ENCODE measurements at regions of chr19 and their contacts with region 1.

Region 1: DNA sequence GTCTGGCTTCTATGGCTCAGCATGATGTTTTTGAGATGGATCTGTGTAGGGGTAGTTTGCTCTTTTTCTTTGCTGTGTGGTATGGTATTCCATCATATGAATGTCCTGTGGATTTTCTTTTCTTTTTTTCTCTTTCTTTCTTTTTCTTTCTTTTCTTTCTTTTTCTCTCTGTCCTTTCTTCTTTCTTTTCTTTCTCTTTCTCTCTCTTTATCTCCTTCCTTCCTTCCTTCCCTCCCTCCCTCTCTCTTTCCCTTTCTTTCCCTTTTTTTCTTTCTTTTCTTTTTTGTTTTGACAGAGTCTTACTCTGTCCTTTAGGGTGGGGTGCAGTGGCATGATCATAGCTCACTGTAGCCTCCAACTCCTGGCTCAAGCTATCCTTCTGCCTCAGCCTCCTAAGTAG is 9.0 kb upstream of the HNRNPUL1 start:
- DNase-seq: no peak
- ATAC-seq: no peak
- H3K4me3 ChIP-seq: no peak overlapping the region
- H3K27ac ChIP-seq: no peak overlapping the region
- H3K4me1 ChIP-seq: no peaks in the 10 kb centered on the region
- H3K27me3 ChIP-seq: no peaks in the 10 kb centered on the region
- CTCF ChIP-seq: no peak
- POLR2A ChIP-seq: no peak

Region 2: GRCh38 chr19:41206926-41207750 is 48.0 kb before region 1 on chr19:
- intact Hi-C with region 1: loop called (anchors 5 kb)
- DNase-seq: peak in 3 of 4 donors; percentile 22 to 28 (median 25)
- ATAC-seq: no peak
- H3K4me3 ChIP-seq: no peak overlapping the region
- H3K27ac ChIP-seq: no peak overlapping the region
- H3K4me1 ChIP-seq: no peaks in the 10 kb centered on the region
- H3K27me3 ChIP-seq: no peaks in the 10 kb centered on the region
- CTCF ChIP-seq: no peak
- POLR2A ChIP-seq: no peak

Region 3: GRCh38 chr19:41296433-41296871 is 41.3 kb after region 1 on chr19:
- intact Hi-C with region 1: no loop called
- DNase-seq: no peak
- ATAC-seq: no peak
- H3K4me3 ChIP-seq: no peak overlapping the region
- H3K27ac ChIP-seq: peak overlapping the region in 3 of 4 donors; percentile 35 to 72 (median 59)
- H3K4me1 ChIP-seq: peaks cover 20% of the 10 kb centered on the region
- H3K27me3 ChIP-seq: no peaks in the 10 kb centered on the region
- CTCF ChIP-seq: no peak
- POLR2A ChIP-seq: no peak

Region 4: DNA sequence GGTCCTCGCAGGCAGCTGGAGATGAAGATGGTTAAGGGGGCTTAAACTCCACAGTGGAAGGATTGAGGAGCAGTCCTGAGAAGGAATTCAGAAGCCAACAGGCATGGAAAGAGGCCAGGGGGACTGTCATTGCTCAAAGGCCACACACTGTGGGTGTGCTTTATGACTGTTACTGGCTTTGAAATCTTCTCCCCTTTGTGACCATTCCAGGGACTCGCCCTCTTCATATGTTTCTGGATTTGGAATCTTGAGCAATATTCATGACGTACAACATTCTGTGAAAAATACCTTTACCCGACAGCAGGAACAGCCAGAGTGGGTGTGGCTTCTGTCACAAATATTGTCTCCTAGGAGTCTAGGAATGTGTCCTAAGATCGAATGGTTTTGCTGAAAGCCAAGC is 416.3 kb after region 1 on chr19:
- intact Hi-C with region 1: no loop called
- DNase-seq: no peak
- ATAC-seq: no peak
- H3K4me3 ChIP-seq: no peak overlapping the region
- H3K27ac ChIP-seq: no peak overlapping the region
- H3K4me1 ChIP-seq: no peaks in the 10 kb centered on the region
- H3K27me3 ChIP-seq: no peaks in the 10 kb centered on the region
- CTCF ChIP-seq: no peak
- POLR2A ChIP-seq: no peak

Measured in body of pancreas (tissue), 4 donors.